Calu3 (cell line): ENCODE measurements at regions of chr6 and their contacts with region 1.

Region 1: DNA sequence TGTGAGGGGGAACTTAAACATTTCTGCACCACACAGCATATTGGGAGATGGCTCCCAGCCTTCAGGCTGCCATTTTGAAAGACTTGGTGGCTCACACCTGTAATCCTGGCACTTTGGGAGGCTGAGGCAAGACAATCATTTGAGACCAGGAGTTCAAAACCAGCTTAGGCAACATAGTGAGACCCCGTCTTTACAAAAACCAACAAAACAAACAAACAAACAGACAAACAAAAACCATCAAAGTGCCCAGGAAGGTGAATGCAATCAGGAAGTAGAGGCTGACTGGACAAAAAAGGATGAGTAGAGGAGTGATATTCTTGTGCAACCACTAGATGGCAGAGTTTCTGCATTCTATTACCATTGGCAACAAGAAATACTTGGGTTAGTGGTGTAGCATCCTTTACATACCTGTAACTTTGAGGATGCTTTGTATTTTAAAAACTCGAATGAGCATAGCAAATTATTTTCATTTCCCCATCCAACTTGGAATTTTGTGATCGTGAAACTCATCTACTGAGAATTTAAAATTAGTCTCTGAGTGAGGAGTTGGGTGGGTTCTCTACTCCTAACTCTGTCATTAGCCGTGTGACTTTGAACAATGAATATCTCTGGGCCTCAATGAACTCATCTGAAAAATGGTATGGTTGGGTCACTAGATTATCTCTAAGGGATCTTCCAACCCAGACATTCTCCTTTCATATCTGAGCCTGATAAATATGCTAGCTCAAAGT is 84.4 kb downstream of the CRYBG1 start:
- DNase-seq: peak; percentile 51
- H3K4me3 Mint-ChIP-seq: no peak overlapping the region
- H3K27ac Mint-ChIP-seq: peak overlapping the region; percentile 50
- H3K4me1 Mint-ChIP-seq: peaks cover 26% of the 10 kb centered on the region
- H3K27me3 Mint-ChIP-seq: no peaks in the 10 kb centered on the region
- CTCF ChIP-seq: peak; percentile 58

Region 2: DNA sequence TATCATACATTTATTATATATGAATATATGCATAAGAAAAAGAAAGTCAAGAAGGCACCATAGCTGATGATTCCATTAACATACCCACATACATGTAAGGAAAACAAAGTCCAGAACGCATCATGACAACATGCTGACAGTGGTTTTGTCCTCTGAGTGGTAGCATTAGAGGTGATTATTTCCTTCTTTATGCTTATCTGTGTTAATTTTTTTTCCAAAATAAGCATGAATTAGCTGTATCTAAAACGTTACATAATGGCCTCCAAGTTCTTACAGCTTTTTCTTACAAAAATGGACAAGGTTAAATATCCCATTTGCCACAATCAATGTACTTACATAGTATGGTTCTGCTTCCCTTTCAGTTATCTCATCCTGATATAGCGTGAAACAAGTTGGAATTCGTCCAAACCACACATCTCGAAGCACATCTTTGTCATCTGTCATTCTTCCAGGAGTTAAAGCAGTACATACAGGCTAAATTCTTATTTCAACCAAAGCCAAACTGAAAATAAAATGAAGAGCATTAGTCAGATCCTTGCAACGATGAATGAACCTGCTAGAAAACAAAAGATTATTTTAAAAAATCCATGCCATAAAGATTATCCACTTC is 129.1 kb before region 1 on chr6:
- CTCF ChIA-PET with region 1: no interaction called
- intact Hi-C with region 1: no loop called
- DNase-seq: no peak
- H3K4me3 Mint-ChIP-seq: no peak overlapping the region
- H3K27ac Mint-ChIP-seq: no peak overlapping the region
- H3K4me1 Mint-ChIP-seq: peaks cover 52% of the 10 kb centered on the region
- H3K27me3 Mint-ChIP-seq: no peaks in the 10 kb centered on the region
- CTCF ChIP-seq: no peak

Region 3: GRCh38 chr6:106339334-106340029 is 105.5 kb before region 1 on chr6:
- CTCF ChIA-PET with region 1: interaction called, 4 read pairs
- intact Hi-C with region 1: loop called (anchors 1 kb)
- DNase-seq: peak; percentile 70
- H3K4me3 Mint-ChIP-seq: peak overlapping the region; percentile 44
- H3K27ac Mint-ChIP-seq: peak overlapping the region; percentile 60
- H3K4me1 Mint-ChIP-seq: peaks cover 12% of the 10 kb centered on the region
- H3K27me3 Mint-ChIP-seq: no peaks in the 10 kb centered on the region
- CTCF ChIP-seq: peak; percentile 75

Region 4: DNA sequence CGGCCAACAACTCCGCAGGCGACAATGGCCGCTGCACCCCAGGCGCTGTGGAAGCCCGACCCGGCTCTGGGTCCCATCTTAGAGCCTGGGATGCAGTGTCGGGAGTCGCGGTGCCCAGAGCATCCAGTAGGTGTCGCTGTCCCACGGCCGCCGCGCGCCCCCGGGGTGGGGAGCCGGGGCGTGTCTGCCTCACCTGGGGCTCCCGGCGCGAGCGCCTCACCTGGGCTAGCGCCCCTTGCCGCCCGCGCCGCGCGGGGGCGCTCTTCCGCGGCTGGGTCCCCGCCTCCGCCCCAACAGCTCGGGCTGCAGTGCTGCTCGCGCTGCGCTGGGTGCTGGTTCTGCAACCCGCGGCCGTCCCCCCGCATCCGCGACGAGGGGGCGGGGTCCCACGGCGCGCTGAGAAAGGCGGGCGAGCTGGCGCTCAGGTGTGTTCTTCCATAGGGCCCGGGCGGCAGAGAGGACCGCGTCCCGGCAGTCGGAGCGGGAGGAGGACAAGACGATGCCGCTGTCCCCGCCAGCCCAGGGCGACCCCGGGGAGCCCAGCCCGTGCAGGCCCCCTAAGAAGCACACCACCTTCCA is 84.4 kb before region 1 on chr6 and contains the start of gene CRYBG1:
- CTCF ChIA-PET with region 1: interaction called, 3 read pairs
- intact Hi-C with region 1: loop called (anchors 2 kb)
- DNase-seq: peak; percentile 96
- H3K4me3 Mint-ChIP-seq: peak within 1 kb of the TSS; percentile 92
- H3K27ac Mint-ChIP-seq: no peak within 1 kb of the TSS
- H3K4me1 Mint-ChIP-seq: peaks cover 13% of the 10 kb centered on the region
- H3K27me3 Mint-ChIP-seq: no peaks in the 10 kb centered on the region
- CTCF ChIP-seq: peak; percentile 97
- total RNA-seq, gene CRYBG1: 40.7 and 45.4 TPM in 2 replicates

Region 5: DNA sequence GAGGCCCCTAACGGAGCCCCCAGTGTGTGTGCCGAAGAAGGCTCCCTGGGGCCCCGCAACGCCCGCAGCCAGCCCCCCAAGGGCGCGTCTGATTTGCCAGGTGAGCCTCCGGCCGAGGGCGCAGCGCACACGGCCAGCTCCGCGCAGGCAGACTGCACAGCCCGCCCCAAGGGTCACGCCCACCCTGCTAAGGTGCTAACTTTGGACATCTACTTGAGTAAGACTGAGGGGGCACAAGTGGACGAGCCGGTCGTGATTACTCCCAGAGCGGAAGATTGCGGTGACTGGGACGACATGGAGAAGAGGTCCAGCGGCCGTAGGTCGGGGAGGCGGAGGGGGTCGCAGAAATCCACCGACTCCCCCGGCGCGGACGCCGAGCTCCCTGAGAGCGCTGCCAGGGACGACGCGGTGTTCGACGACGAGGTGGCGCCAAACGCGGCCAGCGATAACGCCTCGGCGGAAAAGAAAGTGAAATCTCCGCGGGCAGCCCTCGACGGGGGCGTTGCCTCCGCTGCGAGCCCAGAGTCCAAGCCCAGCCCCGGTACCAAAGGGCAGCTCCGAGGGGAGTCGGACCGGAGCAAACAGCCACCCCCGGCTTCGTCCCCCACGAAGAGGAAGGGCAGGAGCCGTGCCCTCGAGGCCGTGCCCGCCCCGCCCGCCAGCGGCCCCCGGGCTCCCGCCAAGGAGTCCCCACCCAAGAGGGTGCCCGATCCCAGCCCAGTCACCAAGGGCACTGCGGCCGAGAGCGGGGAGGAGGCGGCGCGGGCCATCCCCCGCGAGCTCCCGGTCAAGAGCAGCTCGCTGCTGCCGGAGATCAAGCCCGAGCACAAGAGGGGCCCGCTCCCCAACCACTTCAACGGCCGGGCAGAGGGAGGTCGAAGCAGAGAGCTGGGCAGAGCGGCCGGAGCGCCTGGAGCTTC is 67.4 kb after region 1 on chr6:
- CTCF ChIA-PET with region 1: interaction called, 3 read pairs
- intact Hi-C with region 1: loop called (anchors 1 kb)
- DNase-seq: peak; percentile 83
- H3K4me3 Mint-ChIP-seq: peak overlapping the region; percentile 89
- H3K27ac Mint-ChIP-seq: peak overlapping the region; percentile 73
- H3K4me1 Mint-ChIP-seq: peaks cover 11% of the 10 kb centered on the region
- H3K27me3 Mint-ChIP-seq: no peaks in the 10 kb centered on the region
- CTCF ChIP-seq: no peak

Region 6: DNA sequence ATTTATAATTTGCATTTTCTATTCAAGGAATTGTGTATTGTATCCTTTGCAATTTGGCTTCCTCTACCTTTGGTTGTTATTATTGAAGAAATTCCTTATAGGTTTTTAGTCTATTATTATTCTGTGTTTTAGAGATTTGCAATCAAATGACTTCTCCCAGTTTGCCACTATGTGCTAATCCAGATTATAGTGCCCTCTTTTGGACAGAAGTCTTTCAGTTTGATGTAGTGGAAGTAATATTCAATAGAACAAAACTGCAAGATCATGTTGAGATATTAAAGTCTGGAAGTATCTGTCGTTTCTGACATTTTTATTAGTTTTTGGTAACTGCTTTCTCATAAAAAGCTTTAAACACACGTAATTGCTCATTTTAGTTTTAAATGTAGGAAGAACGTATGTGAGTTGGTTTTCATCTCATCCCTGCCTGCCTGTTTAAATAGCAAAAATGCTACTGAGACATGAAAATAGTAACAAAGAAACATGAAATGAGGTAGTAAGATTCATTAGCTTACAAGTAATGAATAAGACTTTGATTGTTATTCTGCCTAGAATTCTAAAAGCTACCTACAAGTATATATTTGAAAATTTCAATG is 111.5 kb after region 1 on chr6:
- CTCF ChIA-PET with region 1: no interaction called
- intact Hi-C with region 1: loop called (anchors 2 kb)
- DNase-seq: no peak
- H3K4me3 Mint-ChIP-seq: no peak overlapping the region
- H3K27ac Mint-ChIP-seq: no peak overlapping the region
- H3K4me1 Mint-ChIP-seq: peaks cover 10% of the 10 kb centered on the region
- H3K27me3 Mint-ChIP-seq: no peaks in the 10 kb centered on the region
- CTCF ChIP-seq: no peak

Region 7: DNA sequence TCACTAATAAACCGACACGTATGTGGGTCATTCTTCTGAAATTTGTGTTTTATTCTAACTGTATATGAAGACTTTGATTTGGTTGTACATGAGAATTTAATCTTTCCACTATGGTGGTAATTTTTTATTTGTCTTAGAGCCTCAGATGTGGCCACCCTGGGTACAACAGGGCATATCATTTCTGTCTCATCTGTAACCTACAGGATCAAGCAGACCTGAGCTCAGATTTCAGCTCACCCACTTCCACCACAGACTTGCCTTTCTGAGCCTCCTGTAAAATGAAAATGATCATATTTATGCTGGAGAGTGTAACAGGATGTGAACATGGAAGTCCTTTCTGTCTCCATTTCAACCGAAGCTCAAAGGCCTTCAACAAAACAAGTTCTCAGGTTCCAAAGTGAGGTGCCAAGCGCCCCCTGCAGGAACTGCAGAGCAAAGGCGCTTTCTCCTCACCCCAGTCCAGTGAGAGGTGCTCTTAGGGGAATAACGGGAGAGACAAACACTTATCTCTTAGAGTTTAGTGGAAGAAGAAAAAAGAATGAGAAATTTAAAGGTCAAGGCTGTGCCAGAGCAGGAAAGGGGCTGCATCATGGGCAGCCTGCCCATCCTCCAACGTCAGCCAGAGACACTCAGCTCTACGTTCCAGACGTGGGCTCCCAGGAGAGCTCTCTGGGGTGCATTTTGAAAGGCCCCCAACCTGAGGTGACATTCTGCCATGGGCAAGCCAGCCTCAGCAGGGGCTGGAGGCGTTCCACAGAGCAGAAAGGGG is 552.6 kb after region 1 on chr6:
- CTCF ChIA-PET with region 1: no interaction called
- intact Hi-C with region 1: loop called (anchors 5 kb)
- DNase-seq: peak; percentile 80
- H3K4me3 Mint-ChIP-seq: no peak overlapping the region
- H3K27ac Mint-ChIP-seq: no peak overlapping the region
- H3K4me1 Mint-ChIP-seq: peaks cover 11% of the 10 kb centered on the region
- H3K27me3 Mint-ChIP-seq: no peaks in the 10 kb centered on the region
- CTCF ChIP-seq: peak; percentile 88